CD14-positive monocyte (primary cell): ENCODE measurements at regions of chr2 and their contacts with region 1.

Region 1: DNA sequence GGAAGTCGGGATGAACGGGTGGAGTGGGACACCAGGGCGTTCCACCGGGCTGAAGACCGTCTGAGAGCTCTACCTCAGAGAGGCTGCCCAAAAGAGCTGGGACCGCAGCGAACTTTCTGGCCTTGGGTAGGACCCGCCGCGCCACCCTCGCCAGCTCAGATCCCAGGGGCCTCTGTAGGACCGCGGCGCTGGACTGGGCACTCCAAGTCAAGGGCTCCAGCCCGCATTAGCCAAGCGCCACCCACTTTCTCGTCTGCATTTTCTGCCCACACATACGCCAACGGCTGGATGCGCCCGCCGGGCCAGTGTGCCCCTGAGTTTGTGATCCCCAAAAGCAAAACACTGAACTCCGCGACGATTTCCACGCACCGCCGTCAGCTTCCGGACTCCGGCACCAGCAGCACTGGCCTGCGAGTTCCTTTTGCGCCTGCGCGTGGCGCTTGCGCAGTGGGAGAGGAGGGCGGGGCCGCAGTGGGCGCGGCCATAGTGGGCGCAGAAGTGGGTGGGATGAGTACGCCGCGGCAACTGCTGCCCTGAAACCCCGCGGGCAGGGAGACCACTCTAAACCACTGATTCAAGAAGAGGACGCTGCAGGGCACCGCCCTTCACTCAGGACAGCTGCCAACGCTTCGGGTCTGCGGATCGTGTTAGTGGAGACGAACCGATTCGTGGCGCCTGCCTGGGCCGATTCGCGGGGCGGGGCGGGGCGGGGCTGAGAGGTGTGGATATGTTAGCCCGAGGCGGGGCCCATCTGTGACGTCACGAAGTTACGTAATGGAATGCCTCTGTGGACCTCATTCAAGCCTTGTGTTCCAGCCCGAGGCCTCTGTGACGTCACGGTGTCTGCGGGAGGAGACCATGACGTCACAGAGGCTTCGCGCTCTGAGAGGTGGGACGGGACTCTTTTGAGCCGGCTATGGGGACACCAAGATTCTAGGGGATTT is 10.5 kb downstream of the OSR1 start:
- DNase-seq: peak; percentile 98 to 99 (median 98)
- H3K4me3 ChIP-seq: peak overlapping the region; percentile 53 to 95 (median 82)
- H3K4me3 Mint-ChIP-seq: peak overlapping the region; percentile 94 to 98
- H3K27ac ChIP-seq: peak overlapping the region; percentile 89 to 93
- H3K27ac Mint-ChIP-seq: peak overlapping the region; percentile 96 to 99 (median 98)
- H3K4me1 ChIP-seq: peaks cover 34 to 36% of the 10 kb centered on the region in 2 donors
- H3K4me1 Mint-ChIP-seq: peaks cover 32% of the 10 kb centered on the region
- H3K27me3 ChIP-seq: peaks cover 29 to 44% of the 10 kb centered on the region in 2 donors
- H3K27me3 Mint-ChIP-seq: peaks cover 38 to 47% (median 46%) of the 10 kb centered on the region in 3 donors
- CTCF ChIP-seq: no peak

Region 2: GRCh38 chr2:18560031-18560796 is 787.7 kb before region 1 on chr2 and contains the start of gene RDH14:
- intact Hi-C with region 1: loop called in 1 of 2 experiments (anchors 5 kb)
- DNase-seq: peak; percentile 66 to 81 (median 69)
- H3K4me3 ChIP-seq: peak within 1 kb of the TSS; percentile 67 to 93 (median 91)
- H3K4me3 Mint-ChIP-seq: peak within 1 kb of the TSS; percentile 92 to 94
- H3K27ac ChIP-seq: peak within 1 kb of the TSS; percentile 43 to 83
- H3K27ac Mint-ChIP-seq: peak within 1 kb of the TSS; percentile 50 to 93 (median 88)
- H3K4me1 ChIP-seq: peaks cover 11 to 16% of the 10 kb centered on the region in 2 donors
- H3K4me1 Mint-ChIP-seq: peaks cover 19% of the 10 kb centered on the region
- H3K27me3 ChIP-seq: no peaks in the 10 kb centered on the region
- H3K27me3 Mint-ChIP-seq: peaks cover 0 to 3% (median 2%) of the 10 kb centered on the region in 3 donors
- CTCF ChIP-seq: no peak
- polyA plus RNA-seq, gene RDH14: 5.5 to 16.3 (median 14.3) TPM

Region 3: DNA sequence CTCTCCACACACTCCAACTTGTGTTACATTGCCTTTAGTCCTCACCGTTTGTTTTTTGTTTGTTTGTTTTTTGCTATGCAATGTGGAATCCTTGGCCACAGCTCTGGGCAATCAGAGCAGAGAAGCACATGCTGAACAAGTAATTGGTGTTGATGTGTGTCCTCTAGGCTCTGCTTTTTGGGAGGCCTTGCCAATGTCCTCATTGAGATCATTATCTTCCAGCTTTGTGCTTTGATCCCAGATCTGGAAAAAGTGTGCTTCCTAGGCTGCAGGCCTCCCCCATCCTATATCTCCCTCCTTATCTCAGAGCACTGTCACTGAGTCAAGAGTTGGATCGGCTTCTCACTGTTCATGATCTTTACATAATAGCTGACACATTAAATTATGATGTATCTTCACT is 15.4 kb before region 1 on chr2:
- intact Hi-C with region 1: no loop called
- DNase-seq: no peak
- H3K4me3 ChIP-seq: no peak overlapping the region
- H3K4me3 Mint-ChIP-seq: no peak overlapping the region
- H3K27ac ChIP-seq: no peak overlapping the region
- H3K27ac Mint-ChIP-seq: no peak overlapping the region
- H3K4me1 ChIP-seq: no peaks in the 10 kb centered on the region
- H3K4me1 Mint-ChIP-seq: no peaks in the 10 kb centered on the region
- H3K27me3 ChIP-seq: no peaks in the 10 kb centered on the region
- H3K27me3 Mint-ChIP-seq: peaks cover 0 to 4% (median 0%) of the 10 kb centered on the region in 3 donors
- CTCF ChIP-seq: no peak

Region 4: DNA sequence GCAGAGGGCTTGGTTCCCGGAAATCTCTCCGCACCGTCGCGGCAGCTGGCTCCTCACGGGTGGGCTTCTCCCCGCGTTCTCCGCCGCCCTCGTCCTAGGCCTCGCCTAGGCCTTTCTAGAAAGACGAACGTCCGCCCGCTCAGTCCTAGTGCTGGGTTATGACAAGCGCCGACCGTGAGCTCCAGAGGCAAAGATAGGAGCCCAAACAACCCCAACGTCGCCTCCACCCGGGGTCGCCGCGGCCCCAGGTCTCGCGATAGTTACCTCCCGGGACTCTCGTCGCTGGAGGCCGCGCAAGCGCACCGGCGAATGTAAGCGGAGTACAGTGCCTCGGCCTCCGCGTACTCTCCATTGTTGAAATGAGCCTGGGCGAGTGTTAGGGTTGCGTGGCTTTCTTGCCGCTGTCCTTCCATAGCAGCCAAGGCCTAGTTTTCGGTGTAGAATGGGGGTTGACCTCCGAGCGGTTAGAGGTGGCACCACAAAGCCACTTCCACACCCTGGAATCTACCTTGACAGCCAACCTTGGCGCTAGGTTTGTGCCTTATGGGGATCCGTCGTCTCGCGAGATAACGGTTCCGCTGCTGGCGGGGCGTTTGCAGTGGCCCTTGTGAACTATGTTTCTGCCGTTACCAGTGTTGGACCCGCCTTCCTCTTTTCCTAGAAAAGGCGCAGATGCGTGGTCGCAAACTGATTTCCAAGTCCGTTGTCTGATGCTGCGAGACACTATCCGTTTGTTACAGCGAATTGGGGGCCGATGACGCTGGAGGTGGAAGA is 553.7 kb after region 1 on chr2 and contains the start of gene TTC32:
- intact Hi-C with region 1: loop called (anchors 5 kb)
- DNase-seq: peak; percentile 91 to 93 (median 92)
- H3K4me3 ChIP-seq: peak within 1 kb of the TSS; percentile 81 to 98 (median 94)
- H3K4me3 Mint-ChIP-seq: peak within 1 kb of the TSS; percentile 92 to 98
- H3K27ac ChIP-seq: peak within 1 kb of the TSS; percentile 98 to 99
- H3K27ac Mint-ChIP-seq: peak within 1 kb of the TSS; percentile 97 to 99 (median 98)
- H3K4me1 ChIP-seq: peaks cover 32 to 39% of the 10 kb centered on the region in 2 donors
- H3K4me1 Mint-ChIP-seq: peaks cover 35% of the 10 kb centered on the region
- H3K27me3 ChIP-seq: no peaks in the 10 kb centered on the region
- H3K27me3 Mint-ChIP-seq: peaks cover 2 to 3% (median 3%) of the 10 kb centered on the region in 3 donors
- CTCF ChIP-seq: no peak
- polyA plus RNA-seq, gene TTC32: 17.6 to 27.7 (median 20.1) TPM

Region 5: GRCh38 chr2:20051532-20052228 is 703.8 kb after region 1 on chr2 and contains the start of gene LAPTM4A:
- intact Hi-C with region 1: loop called in 1 of 2 experiments (anchors 10 kb)
- DNase-seq: peak; percentile 97 to 99 (median 99)
- H3K4me3 ChIP-seq: peak within 1 kb of the TSS; percentile 83 to 95 (median 83)
- H3K4me3 Mint-ChIP-seq: no peak within 1 kb of the TSS
- H3K27ac ChIP-seq: peak within 1 kb of the TSS; percentile 94 to 98
- H3K27ac Mint-ChIP-seq: no peak within 1 kb of the TSS
- H3K4me1 ChIP-seq: peaks cover 27 to 34% of the 10 kb centered on the region in 2 donors
- H3K4me1 Mint-ChIP-seq: peaks cover 28% of the 10 kb centered on the region
- H3K27me3 ChIP-seq: peaks cover 4 to 20% of the 10 kb centered on the region in 2 donors
- H3K27me3 Mint-ChIP-seq: peaks cover 12 to 28% (median 16%) of the 10 kb centered on the region in 3 donors
- CTCF ChIP-seq: no peak
- polyA plus RNA-seq, gene LAPTM4A: 182 to 442 (median 421) TPM

Region 6: GRCh38 chr2:20661067-20661980 is 1313.4 kb after region 1 on chr2:
- intact Hi-C with region 1: loop called in 1 of 2 experiments (anchors 10 kb)
- DNase-seq: peak; percentile 63 to 79 (median 74)
- H3K4me3 ChIP-seq: no peak overlapping the region
- H3K4me3 Mint-ChIP-seq: peak overlapping the region in 1 of 2 donors; percentile 69
- H3K27ac ChIP-seq: no peak overlapping the region
- H3K27ac Mint-ChIP-seq: no peak overlapping the region
- H3K4me1 ChIP-seq: peaks cover 3 to 11% of the 10 kb centered on the region in 2 donors
- H3K4me1 Mint-ChIP-seq: peaks cover 16% of the 10 kb centered on the region
- H3K27me3 ChIP-seq: peaks cover 31 to 65% of the 10 kb centered on the region in 2 donors
- H3K27me3 Mint-ChIP-seq: peaks cover 56 to 75% (median 64%) of the 10 kb centered on the region in 3 donors
- CTCF ChIP-seq: peak; percentile 96